Testis (tissue), 5 donors: ENCODE measurements at regions of chr19 and their contacts with region 1.

Region 1: DNA sequence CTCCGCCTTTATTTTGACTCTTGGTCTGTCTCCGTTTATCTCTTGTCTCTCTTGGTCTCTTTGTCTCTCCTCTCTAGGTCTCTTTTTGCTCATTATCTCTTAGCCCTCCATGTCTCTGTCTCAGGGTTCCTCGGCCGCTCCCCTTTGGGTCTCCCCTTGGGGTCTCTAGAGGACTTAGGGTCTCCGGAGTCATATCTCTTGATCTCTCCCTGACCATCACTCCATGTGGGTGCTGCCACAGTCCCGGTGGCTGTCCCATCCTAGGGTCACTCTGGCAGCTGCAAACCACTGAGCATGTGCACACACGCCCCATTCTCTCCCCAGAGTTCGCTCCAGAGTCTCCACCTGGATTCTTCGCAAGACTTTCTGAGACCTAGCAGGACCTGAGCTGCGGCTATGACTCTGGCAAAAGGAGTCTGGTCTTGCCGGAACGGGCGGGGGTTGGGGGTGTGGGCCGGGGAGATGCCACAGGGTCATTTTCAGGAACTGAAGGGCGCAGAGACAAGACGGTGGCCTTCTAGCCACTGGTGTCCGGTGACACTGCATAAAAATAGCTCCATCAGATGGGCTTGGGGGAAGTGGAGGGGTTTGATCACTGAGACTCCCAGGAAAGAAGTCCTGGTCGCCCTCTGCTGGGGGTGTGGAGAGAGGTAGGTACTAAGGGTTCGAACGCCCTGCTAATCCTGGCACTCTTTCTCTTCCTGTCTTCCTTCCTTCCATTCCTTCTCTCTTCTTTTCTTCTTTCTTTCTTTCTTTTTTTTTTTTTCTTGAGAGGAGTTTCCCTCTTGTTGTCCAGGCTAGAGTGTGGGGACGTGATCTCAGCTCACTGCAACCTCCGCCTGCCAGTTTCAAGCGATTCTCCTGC is 1.2 kb upstream of the KCNA7 start:
- DNase-seq: no peak
- H3K4me3 ChIP-seq: no peak overlapping the region
- H3K27ac ChIP-seq: no peak overlapping the region
- H3K4me1 ChIP-seq: no peaks in the 10 kb centered on the region
- H3K27me3 ChIP-seq: no peaks in the 10 kb centered on the region
- CTCF ChIP-seq: no peak
- POLR2A ChIP-seq: no peak

Region 2: GRCh38 chr19:49133621-49134454 is 60.1 kb after region 1 on chr19:
- intact Hi-C with region 1: no loop called
- DNase-seq: peak; percentile 67
- H3K4me3 ChIP-seq: peak overlapping the region in 1 of 2 donors; percentile 5
- H3K27ac ChIP-seq: no peak overlapping the region
- H3K4me1 ChIP-seq: peaks cover 3% of the 10 kb centered on the region
- H3K27me3 ChIP-seq: no peaks in the 10 kb centered on the region
- CTCF ChIP-seq: no peak
- POLR2A ChIP-seq: no peak

Region 3: DNA sequence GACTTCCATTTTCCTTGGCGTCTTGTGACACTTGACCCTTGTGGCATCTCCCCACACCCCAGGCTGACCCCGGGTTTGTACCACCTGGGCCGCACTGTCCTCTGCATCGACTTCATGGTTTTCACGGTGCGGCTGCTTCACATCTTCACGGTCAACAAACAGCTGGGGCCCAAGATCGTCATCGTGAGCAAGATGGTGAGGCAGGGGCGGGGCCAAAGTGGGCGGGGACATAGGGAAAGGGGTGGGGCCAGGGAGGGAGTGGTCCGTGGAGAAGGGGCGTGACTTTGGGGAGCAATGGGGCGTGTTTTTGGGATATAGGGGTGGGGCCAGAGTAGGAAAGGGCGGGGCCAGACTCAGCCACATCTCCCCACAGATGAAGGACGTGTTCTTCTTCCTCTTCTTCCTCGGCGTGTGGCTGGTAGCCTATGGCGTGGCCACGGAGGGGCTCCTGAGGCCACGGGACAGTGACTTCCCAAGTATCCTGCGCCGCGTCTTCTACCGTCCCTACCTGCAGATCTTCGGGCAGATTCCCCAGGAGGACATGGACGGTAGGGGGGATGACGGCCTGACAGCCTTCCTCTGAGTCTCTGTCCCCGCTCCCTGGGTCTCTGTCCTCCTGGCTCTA is 126.6 kb after region 1 on chr19:
- intact Hi-C with region 1: loop called (anchors 10 kb)
- DNase-seq: peak; percentile 72
- H3K4me3 ChIP-seq: peak overlapping the region in 1 of 2 donors; percentile 5
- H3K27ac ChIP-seq: no peak overlapping the region
- H3K4me1 ChIP-seq: no peaks in the 10 kb centered on the region
- H3K27me3 ChIP-seq: no peaks in the 10 kb centered on the region
- CTCF ChIP-seq: no peak
- POLR2A ChIP-seq: no peak